ENCODE measurements at regions of chr1 and their contacts with region 1.

Region 1: DNA sequence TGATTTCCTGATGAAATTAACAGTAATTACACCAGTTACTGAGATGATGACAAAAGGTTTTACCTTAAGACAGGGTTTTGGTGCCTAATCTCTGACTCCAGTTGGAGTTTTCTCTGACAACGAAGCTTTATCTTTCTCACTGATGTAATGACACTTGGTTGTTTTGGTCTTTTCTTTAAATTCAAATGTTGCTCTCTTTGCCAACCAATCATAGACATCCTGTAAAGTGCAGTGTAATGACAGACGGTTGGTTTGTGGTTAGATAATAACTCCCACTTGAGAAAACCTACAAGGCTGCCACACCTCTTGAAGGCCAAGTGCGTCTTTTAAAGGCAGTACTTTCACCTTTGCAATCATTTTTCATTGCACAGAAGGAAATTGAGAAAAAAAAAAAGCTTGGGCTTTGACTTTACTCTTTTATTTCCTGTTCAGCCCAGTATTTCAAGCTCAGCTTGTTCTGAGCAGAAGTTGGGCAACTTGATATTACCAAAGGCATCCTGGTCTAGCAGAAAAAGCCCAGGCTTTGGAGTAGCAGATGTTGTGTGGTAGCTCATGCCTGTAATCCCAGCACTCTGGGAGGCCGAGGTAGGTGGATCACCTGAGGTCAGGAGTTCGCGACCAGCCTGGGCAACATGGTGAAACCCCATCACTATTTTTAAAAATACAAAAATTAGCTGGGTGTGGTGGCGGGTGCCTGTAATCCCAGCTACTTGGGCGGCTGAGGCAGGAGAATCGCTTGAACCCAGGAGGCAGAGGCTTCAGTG is 14.9 kb downstream of the PDIK1L start:
- DNase-seq: peak; percentile 68
- H3K4me3 Mint-ChIP-seq: peak overlapping the region; percentile 71
- H3K27ac Mint-ChIP-seq: peak overlapping the region; percentile 93
- H3K4me1 Mint-ChIP-seq: peaks cover 61% of the 10 kb centered on the region
- H3K27me3 Mint-ChIP-seq: no peaks in the 10 kb centered on the region

Region 2: DNA sequence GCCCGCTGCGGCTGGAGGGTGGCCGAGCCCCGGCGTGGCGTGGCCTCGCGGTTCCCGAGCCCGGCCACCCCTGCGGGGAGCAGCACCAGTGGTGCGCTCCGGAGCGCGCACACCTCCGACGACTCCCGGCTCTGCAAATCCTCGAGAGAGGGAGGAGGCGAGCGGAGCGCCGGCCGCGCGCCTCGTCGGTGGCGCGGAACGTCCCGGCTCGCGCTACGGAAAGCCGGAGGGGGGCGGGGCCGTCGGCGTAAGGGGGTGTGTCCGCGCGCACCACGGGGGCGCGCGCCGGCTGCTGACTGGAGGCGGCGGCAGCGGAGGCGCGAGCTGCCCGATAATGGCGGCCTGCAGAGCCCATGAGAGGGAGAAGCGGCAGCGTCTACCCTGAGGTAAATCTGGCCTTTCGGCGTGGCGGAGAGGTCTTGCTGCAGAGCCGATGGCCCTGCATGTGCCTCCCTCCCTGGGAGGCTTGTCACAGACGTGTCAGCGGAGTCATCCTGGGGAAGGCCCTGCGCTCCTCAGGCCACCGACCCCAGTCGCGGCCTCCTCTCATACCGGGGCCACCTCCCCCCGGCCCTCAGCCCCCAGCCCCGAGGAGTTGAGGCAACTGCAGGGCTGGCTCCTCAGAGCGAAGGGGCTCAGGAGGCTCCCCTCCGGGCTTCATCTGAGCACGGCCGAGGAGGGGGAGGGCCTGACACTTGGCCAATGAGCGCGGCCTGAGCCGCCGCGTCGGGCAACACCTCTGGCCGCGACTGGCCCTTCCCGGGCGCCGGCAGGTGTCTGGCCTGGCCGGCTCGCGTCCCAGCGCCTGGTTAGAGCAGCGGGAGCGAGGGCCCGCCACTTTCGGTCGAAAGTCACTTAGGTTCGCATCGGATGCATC is 14.7 kb before region 1 on chr1 and contains the start of gene PDIK1L:
- intact Hi-C with region 1: loop called (anchors 1 kb)
- DNase-seq: peak; percentile 90
- H3K4me3 Mint-ChIP-seq: peak within 1 kb of the TSS; percentile 96
- H3K27ac Mint-ChIP-seq: peak within 1 kb of the TSS; percentile 92
- H3K4me1 Mint-ChIP-seq: peaks cover 29% of the 10 kb centered on the region
- H3K27me3 Mint-ChIP-seq: no peaks in the 10 kb centered on the region
- total RNA-seq, gene PDIK1L: 15.2 and 17.2 TPM in 2 replicates

Measured in activated T-helper 2 cell treated with anti-CD3 and anti-CD28 coated beads, Interferon-gamma antibody, Interleukin-2, Interleukin-4, amounts not matched to agents 10 μg/mL and 5 μg/mL and 100 μg/mL, durations not matched to agents 14 hours and 24 hours and 36 hours (primary cell).